PC-9 (cell line): ENCODE measurements at regions of chr10 and their contacts with region 1.

Region 1: GRCh38 chr10:63629363-63630084 is 108.3 kb downstream of the REEP3 start:
- DNase-seq: peak; percentile 94 to 97
- H3K4me3 ChIP-seq: peak overlapping the region; percentile 76
- H3K27ac ChIP-seq: peak overlapping the region; percentile 78
- H3K4me1 ChIP-seq: peaks cover 24% of the 10 kb centered on the region
- H3K27me3 ChIP-seq: no peaks in the 10 kb centered on the region
- CTCF ChIP-seq: peak; percentile 86

Region 2: GRCh38 chr10:63166742-63167258 is 462.7 kb before region 1 on chr10:
- CTCF ChIA-PET with region 1: interaction called, 6 read pairs
- POLR2A ChIA-PET with region 1: interaction called, 17 read pairs
- intact Hi-C with region 1: loop called (anchors 1 kb)
- DNase-seq: peak; percentile 27 to 60
- H3K4me3 ChIP-seq: no peak overlapping the region
- H3K27ac ChIP-seq: no peak overlapping the region
- H3K4me1 ChIP-seq: no peaks in the 10 kb centered on the region
- H3K27me3 ChIP-seq: no peaks in the 10 kb centered on the region
- CTCF ChIP-seq: peak; percentile 90

Region 3: DNA sequence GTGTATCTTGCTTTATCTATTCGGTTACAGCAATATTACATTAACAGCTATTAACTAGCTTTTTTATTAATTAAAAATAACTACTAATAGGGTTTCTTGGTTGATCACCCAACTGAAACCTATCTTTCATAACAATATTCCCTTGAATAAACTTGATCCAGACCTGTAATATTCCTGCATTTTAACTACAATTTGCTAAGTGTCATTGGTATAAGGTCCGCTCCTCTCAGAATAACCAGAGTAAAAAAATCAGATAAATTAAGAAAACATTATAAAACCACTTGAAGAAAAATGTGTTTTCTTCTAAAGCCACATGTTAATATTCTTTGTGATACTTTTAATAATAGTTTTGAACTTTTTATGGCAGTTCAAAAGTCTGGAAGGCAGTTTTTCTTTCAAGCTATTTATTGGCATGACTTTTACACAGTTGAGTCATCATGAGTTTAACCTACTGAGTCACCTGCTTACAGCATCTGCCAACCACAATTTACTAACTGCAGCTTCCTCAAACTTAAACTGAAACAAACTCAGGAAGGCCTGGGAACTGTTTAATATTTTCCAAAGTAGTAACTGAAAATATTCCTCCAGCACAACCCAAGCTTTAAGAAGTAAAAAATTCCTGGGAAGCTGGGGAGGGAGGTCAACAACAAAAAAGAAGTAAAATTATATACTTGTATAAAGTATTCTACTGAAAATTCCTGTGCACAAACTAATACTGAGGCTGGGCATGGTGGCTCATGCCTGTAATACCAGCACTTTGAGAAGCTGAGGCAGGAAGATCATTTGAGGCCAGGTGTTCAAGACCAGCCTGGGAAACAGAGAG is 393.2 kb before region 1 on chr10:
- CTCF ChIA-PET with region 1: no interaction called
- POLR2A ChIA-PET with region 1: interaction called, 11 read pairs
- intact Hi-C with region 1: no loop called
- DNase-seq: peak; percentile 22 to 91
- H3K4me3 ChIP-seq: no peak overlapping the region
- H3K27ac ChIP-seq: peak overlapping the region; percentile 93
- H3K4me1 ChIP-seq: peaks cover 40% of the 10 kb centered on the region
- H3K27me3 ChIP-seq: no peaks in the 10 kb centered on the region
- CTCF ChIP-seq: no peak

Region 4: GRCh38 chr10:63465293-63466143 is 164.0 kb before region 1 on chr10 and contains the start of gene JMJD1C:
- CTCF ChIA-PET with region 1: no interaction called
- POLR2A ChIA-PET with region 1: no interaction called
- intact Hi-C with region 1: loop called (anchors 1 kb)
- DNase-seq: peak; percentile 65 to 80
- H3K4me3 ChIP-seq: peak within 1 kb of the TSS; percentile 94
- H3K27ac ChIP-seq: peak within 1 kb of the TSS; percentile 33
- H3K4me1 ChIP-seq: peaks cover 23% of the 10 kb centered on the region
- H3K27me3 ChIP-seq: no peaks in the 10 kb centered on the region
- CTCF ChIP-seq: no peak
- total RNA-seq, gene JMJD1C: 68.6 and 78.7 TPM in 2 replicates

Region 5: GRCh38 chr10:63554657-63555056 is 74.9 kb before region 1 on chr10:
- CTCF ChIA-PET with region 1: interaction called, 3 read pairs
- POLR2A ChIA-PET with region 1: interaction called, 3 read pairs
- intact Hi-C with region 1: loop called (anchors 1 kb)
- DNase-seq: peak; percentile 60
- H3K4me3 ChIP-seq: peak overlapping the region; percentile 1; the same call in 1 of the 2 replicates
- H3K27ac ChIP-seq: peak overlapping the region; percentile 99
- H3K4me1 ChIP-seq: peaks cover 36% of the 10 kb centered on the region
- H3K27me3 ChIP-seq: no peaks in the 10 kb centered on the region
- CTCF ChIP-seq: no peak

Region 6: GRCh38 chr10:63744060-63744941 is 114.8 kb after region 1 on chr10:
- CTCF ChIA-PET with region 1: no interaction called
- POLR2A ChIA-PET with region 1: no interaction called
- intact Hi-C with region 1: no loop called
- DNase-seq: no peak
- H3K4me3 ChIP-seq: no peak overlapping the region
- H3K27ac ChIP-seq: no peak overlapping the region
- H3K4me1 ChIP-seq: no peaks in the 10 kb centered on the region
- H3K27me3 ChIP-seq: no peaks in the 10 kb centered on the region
- CTCF ChIP-seq: no peak

Region 7: GRCh38 chr10:63767138-63767801 is 137.7 kb after region 1 on chr10:
- CTCF ChIA-PET with region 1: no interaction called
- POLR2A ChIA-PET with region 1: no interaction called
- intact Hi-C with region 1: loop called (anchors 2 kb)
- DNase-seq: no peak
- H3K4me3 ChIP-seq: no peak overlapping the region
- H3K27ac ChIP-seq: no peak overlapping the region
- H3K4me1 ChIP-seq: no peaks in the 10 kb centered on the region
- H3K27me3 ChIP-seq: no peaks in the 10 kb centered on the region
- CTCF ChIP-seq: peak; percentile 71